T-cell (primary cell): ENCODE measurements at regions of chr4 and their contacts with region 1.

Region 1: DNA sequence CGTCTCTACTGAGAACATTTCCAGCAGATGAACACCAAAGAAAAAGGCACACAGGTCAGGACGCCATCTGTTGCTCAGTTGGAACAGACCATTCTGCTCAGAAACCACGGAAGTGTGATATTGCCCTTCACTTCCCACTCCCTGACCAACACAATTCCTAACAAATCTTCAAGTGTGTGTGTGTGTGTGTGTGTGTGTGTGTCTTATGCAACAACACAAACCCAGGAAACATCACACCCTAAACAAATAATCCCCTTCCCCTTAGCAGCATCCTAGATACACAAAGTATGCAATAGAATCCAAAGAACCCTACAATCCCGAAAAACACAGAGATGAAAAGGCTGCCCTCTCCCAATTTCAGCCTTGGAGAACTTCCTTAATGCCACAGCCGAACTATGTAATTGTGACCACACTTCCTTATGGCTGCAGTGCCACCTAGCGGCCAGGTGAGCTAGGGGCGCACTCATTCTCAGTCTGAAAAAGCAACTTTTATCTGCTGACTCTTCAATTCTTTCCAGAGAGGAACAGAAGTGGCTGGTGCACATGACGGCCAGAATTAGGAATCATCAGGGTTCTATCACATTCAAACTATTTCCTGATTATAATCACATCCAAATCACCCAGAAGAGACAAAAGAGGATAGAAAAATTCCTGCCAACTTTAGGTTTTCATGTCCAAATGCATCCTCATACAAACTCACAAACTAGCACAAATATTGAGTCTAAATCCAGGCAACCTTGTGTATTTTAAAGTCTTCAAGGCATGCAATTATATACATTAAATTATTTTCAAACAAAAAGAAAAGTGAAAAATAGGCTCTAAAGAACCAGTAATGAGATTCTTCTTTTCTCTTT is 164.9 kb downstream of the DHX15 start:
- DNase-seq: peak in 34 of 35 experiments; percentile 1 to 71 (median 37)
- ATAC-seq: peak in 3 of 4 experiments; percentile 39 to 60 (median 42)
- H3K4me3 ChIP-seq: no peak overlapping the region
- H3K4me3 Mint-ChIP-seq: peak overlapping the region in 1 of 3 donors; percentile 1
- H3K27ac ChIP-seq: no peak overlapping the region
- H3K27ac Mint-ChIP-seq: no peak overlapping the region
- H3K4me1 ChIP-seq: no peaks in the 10 kb centered on the region
- H3K4me1 Mint-ChIP-seq: peaks cover 4 to 6% (median 6%) of the 10 kb centered on the region in 3 donors
- H3K27me3 ChIP-seq: no peaks in the 10 kb centered on the region
- H3K27me3 Mint-ChIP-seq: peaks cover 9 to 13% of the 10 kb centered on the region in 2 donors

Region 2: DNA sequence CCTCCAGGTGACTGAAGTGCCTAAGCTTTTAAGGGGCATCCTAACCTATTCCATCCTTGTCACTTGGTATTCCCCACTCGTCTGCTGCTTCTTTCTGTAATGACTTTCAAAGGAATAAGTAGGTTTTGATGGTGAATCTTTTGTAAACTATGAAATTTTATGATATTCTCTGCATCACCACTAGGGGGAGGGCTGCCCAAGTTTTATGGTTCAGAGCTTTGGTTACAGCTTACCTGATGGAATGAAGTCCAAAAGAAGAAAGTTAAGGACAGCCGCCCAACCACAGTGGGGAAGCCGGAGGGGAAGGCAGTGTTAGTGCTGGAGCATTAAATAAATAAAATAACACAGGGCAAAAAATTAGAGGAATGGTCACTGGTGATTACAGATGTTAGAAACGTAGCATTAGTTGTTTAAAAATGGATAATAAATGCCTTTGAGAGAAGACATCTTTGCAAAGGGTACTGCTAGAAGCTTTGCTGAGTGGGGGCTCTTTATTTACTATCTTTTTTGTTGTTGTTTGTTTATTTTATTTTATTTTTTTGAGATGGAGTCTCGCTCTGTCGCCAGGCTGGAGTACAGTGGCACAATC is 1521.8 kb before region 1 on chr4:
- CTCF ChIA-PET with region 1: interaction called, 7 to 14 read pairs
- POLR2A ChIA-PET with region 1: no interaction called
- DNase-seq: peak in 7 of 35 experiments; percentile 0 to 24 (median 3)
- ATAC-seq: no peak
- H3K4me3 ChIP-seq: no peak overlapping the region
- H3K4me3 Mint-ChIP-seq: no peak overlapping the region
- H3K27ac ChIP-seq: no peak overlapping the region
- H3K27ac Mint-ChIP-seq: no peak overlapping the region
- H3K4me1 ChIP-seq: no peaks in the 10 kb centered on the region
- H3K4me1 Mint-ChIP-seq: no peaks in the 10 kb centered on the region
- H3K27me3 ChIP-seq: peaks cover 0 to 5% of the 10 kb centered on the region in 2 experiments
- H3K27me3 Mint-ChIP-seq: peaks cover 4 to 5% of the 10 kb centered on the region in 2 donors

Region 3: DNA sequence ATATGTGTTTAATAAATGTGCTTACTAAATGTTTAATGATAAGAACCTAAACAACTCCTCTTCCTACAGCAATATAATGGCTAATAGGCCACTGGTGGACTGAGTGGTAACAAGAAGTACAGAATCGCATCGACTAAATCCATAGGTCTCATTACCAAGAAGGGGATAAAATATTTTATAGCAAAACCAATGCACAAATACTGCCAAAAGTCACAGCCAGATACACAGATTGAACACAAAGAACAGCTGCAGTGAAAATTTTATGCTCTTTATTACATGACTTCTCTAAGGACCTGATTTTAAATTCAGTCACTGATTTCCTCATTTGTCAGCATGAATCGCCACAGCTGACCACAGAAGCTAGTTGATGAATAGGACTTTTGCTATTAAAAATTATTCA is 120.5 kb before region 1 on chr4:
- CTCF ChIA-PET with region 1: no interaction called
- POLR2A ChIA-PET with region 1: no interaction called
- DNase-seq: no peak
- ATAC-seq: no peak
- H3K4me3 ChIP-seq: no peak overlapping the region
- H3K4me3 Mint-ChIP-seq: no peak overlapping the region
- H3K27ac ChIP-seq: no peak overlapping the region
- H3K27ac Mint-ChIP-seq: no peak overlapping the region
- H3K4me1 ChIP-seq: no peaks in the 10 kb centered on the region
- H3K4me1 Mint-ChIP-seq: no peaks in the 10 kb centered on the region
- H3K27me3 ChIP-seq: no peaks in the 10 kb centered on the region
- H3K27me3 Mint-ChIP-seq: peaks cover 0 to 4% of the 10 kb centered on the region in 2 donors

Region 4: DNA sequence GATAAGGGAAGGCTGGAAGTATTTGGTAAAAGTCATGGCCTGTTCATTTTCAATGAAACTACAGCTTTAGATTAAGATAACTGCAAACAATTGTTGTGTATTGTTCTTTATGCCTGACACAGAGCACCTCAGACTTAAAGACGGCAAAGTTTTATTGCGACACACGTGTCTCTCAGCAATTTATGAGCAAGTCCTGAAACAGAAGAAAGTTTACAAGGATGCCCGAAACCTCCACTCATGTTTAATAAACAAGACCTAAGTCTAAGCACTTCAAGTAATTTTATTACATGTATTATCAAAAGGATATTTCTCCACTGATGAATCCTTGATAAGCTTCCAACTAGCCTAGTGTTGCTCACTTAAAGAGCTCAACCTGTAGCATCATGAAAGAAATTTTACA is 114.0 kb after region 1 on chr4:
- CTCF ChIA-PET with region 1: interaction called in 1 of 2 experiments, 11 read pairs
- POLR2A ChIA-PET with region 1: no interaction called
- DNase-seq: no peak
- ATAC-seq: no peak
- H3K4me3 ChIP-seq: no peak overlapping the region
- H3K4me3 Mint-ChIP-seq: no peak overlapping the region
- H3K27ac ChIP-seq: no peak overlapping the region
- H3K27ac Mint-ChIP-seq: no peak overlapping the region
- H3K4me1 ChIP-seq: no peaks in the 10 kb centered on the region
- H3K4me1 Mint-ChIP-seq: peaks cover 3 to 9% (median 7%) of the 10 kb centered on the region in 3 donors
- H3K27me3 ChIP-seq: no peaks in the 10 kb centered on the region
- H3K27me3 Mint-ChIP-seq: no peaks in the 10 kb centered on the region